ENCODE measurements at regions of chr11 and their contacts with region 1.

Region 1: DNA sequence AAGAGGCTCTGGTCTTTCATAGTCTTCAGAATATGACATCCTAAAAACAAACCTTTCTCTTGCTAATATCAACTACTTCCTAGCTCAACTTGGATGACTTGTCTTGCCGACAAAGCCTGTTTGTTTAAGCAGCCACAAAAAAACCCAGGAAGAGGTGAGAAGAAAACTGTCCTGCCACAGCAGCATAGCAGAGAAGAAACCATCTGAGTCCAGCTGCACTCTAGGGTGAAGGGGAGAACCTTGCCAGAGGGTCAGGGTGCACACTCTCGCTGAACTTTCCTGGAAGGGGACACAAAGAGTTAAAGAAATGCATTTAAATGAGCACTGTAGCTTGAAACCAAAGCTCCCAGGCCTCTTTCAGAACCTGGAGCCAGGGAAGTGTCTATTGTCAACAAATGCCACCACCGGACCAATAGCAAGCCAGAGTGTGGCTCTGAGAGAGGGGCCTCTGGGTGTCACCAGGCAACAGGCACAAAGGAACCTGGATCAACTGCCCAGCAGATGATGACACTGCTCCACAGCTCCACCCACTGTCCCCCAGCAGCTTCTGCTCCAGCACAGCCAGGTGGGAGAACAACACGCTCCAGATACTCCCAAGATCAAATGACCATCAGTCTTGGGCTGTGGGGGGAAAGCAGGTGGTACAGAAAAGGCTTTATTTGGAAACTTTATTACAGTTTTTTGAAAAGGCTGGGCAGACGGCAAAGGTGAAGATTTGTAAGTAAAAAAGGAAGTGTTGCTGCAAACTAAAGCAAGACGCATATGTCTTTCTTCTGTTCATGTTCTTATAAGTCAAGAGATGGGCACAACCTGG is 105.7 kb downstream of the RASSF10 start:
- DNase-seq: no peak
- ATAC-seq: no peak

Region 2: GRCh38 chr11:12864316-12865156 is 250.2 kb before region 1 on chr11:
- intact Hi-C with region 1: no loop called
- DNase-seq: no peak
- ATAC-seq: no peak

Region 3: GRCh38 chr11:12989428-12990161 is 125.2 kb before region 1 on chr11:
- intact Hi-C with region 1: loop called (anchors 10 kb)
- DNase-seq: no peak
- ATAC-seq: no peak

Measured in Right ventricle myocardium inferior (tissue), 1 donor.